ENCODE measurements at regions of chr4 and their contacts with region 1.

Region 1: DNA sequence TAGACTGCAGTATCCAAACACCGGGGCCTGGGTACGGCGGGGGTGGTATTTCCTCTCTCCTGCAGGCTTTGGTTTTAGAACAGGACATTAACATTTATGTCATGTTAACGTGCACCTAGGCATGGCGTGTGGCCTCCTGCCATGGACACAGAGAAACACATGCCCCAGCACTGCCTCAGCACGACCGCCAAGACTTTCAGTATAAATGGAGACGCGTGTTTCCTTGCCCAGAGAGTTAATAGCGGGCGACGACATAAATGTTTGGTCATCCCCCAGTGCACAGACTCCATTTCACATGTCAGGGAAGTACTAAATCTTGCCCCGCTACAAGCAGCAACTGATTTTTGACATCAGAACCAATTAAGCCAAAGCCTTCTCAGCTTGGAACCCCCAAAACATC is 737.9 kb downstream of the RAB28 start:
- DNase-seq: no peak
- ATAC-seq: no peak
- H3K4me3 ChIP-seq: no peak overlapping the region
- H3K4me3 Mint-ChIP-seq: no peak overlapping the region
- H3K27ac ChIP-seq: no peak overlapping the region
- H3K27ac Mint-ChIP-seq: no peak overlapping the region
- H3K4me1 ChIP-seq: no peaks in the 10 kb centered on the region
- H3K4me1 Mint-ChIP-seq: no peaks in the 10 kb centered on the region
- H3K27me3 ChIP-seq: peaks cover 0 to 5% of the 10 kb centered on the region in 2 experiments
- H3K27me3 Mint-ChIP-seq: peaks cover 0 to 5% of the 10 kb centered on the region in 2 donors

Region 2: DNA sequence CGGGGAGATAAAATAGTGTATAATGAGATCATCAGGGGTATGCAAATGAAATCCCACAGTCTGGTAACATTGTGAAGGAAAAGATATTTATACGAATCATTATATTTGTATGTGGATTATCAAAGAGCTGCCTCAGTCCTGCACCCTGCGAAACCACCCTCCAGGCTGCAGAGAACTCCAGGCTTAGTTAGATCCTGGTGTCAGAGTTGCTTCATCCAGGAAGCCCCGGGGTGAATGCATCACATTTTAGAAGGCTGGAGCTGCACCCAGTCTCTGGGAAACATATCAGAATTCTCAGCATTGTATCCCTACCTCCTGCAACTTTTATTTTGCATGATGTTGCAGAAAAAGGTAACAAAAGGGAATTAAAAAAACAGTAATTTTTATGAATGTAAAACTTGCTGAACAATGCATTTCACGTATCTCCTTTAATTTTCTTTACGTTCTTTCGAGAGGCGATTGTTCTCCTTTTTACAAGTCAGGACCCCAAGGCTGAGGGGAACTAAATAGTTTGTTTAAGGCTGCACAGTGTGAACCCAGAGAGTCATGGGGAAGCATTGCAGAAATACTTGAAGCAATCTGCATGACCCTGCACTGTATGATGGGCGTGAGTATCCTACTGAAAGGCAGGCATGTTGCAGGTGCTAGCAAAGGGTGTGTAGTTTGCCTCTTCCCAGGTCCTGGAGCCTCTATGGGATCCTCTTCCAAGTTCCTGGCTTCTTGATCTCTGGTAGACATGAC is 1762.2 kb before region 1 on chr4:
- CTCF ChIA-PET with region 1: no interaction called
- POLR2A ChIA-PET with region 1: interaction called in 1 of 2 experiments, 10 read pairs
- DNase-seq: no peak
- ATAC-seq: no peak
- H3K4me3 ChIP-seq: no peak overlapping the region
- H3K4me3 Mint-ChIP-seq: no peak overlapping the region
- H3K27ac ChIP-seq: no peak overlapping the region
- H3K27ac Mint-ChIP-seq: no peak overlapping the region
- H3K4me1 ChIP-seq: peaks cover 2 to 10% of the 10 kb centered on the region in 2 experiments
- H3K4me1 Mint-ChIP-seq: peaks cover 12 to 20% (median 17%) of the 10 kb centered on the region in 3 donors
- H3K27me3 ChIP-seq: no peaks in the 10 kb centered on the region
- H3K27me3 Mint-ChIP-seq: no peaks in the 10 kb centered on the region

Region 3: DNA sequence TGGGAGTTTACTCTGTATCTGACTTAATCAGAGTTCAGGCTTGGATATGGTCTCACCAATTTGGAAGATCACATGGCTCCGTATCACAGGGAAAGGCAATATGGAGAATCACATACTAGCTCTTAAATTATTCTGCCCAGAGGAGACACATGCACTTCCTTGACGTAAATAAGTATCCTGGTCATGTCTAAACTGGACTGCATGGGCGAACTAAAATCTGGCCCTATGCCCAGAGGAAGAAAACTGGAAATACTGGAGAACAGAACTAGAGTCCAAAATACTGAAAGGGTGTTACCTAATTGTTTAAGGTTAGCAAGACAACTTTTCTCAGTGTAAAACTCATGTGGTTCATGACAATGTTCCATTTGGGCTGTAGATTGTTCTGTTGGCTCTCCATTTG is 94.3 kb before region 1 on chr4:
- CTCF ChIA-PET with region 1: no interaction called
- POLR2A ChIA-PET with region 1: no interaction called
- DNase-seq: no peak
- ATAC-seq: no peak
- H3K4me3 ChIP-seq: no peak overlapping the region
- H3K4me3 Mint-ChIP-seq: no peak overlapping the region
- H3K27ac ChIP-seq: no peak overlapping the region
- H3K27ac Mint-ChIP-seq: no peak overlapping the region
- H3K4me1 ChIP-seq: no peaks in the 10 kb centered on the region
- H3K4me1 Mint-ChIP-seq: no peaks in the 10 kb centered on the region
- H3K27me3 ChIP-seq: no peaks in the 10 kb centered on the region
- H3K27me3 Mint-ChIP-seq: no peaks in the 10 kb centered on the region

Measured in T-cell (primary cell).